ENCODE measurements at regions of chr1 and their contacts with region 1.

Region 1: GRCh38 chr1:210311726-210312493 is 16.8 kb upstream of the HHAT start:
- DNase-seq: peak in 1 of 2 donors; percentile 13
- H3K4me3 ChIP-seq: peak overlapping the region; percentile 32 to 44 (median 38)
- H3K27ac ChIP-seq: peak overlapping the region in 4 of 5 donors; percentile 43 to 74 (median 56)
- H3K4me1 ChIP-seq: peaks cover 8 to 18% (median 13%) of the 10 kb centered on the region in 4 donors
- H3K27me3 ChIP-seq: no peaks in the 10 kb centered on the region
- CTCF ChIP-seq: no peak
- EP300 ChIP-seq: no peak
- POLR2A ChIP-seq: no peak

Region 2: GRCh38 chr1:210024996-210025395 is 286.9 kb before region 1 on chr1:
- intact Hi-C with region 1: no loop called
- DNase-seq: no peak
- H3K4me3 ChIP-seq: no peak overlapping the region
- H3K27ac ChIP-seq: no peak overlapping the region
- H3K4me1 ChIP-seq: no peaks in the 10 kb centered on the region
- H3K27me3 ChIP-seq: no peaks in the 10 kb centered on the region
- CTCF ChIP-seq: no peak
- EP300 ChIP-seq: no peak
- POLR2A ChIP-seq: no peak

Region 3: GRCh38 chr1:210143465-210144062 is 168.3 kb before region 1 on chr1:
- intact Hi-C with region 1: loop called (anchors 5 kb)
- DNase-seq: peak; percentile 79 to 81
- H3K4me3 ChIP-seq: no peak overlapping the region
- H3K27ac ChIP-seq: no peak overlapping the region
- H3K4me1 ChIP-seq: no peaks in the 10 kb centered on the region
- H3K27me3 ChIP-seq: no peaks in the 10 kb centered on the region
- CTCF ChIP-seq: peak in 5 of 7 experiments; percentile 22 to 56 (median 45)
- EP300 ChIP-seq: no peak
- POLR2A ChIP-seq: no peak

Region 4: GRCh38 chr1:210200124-210200736 is 111.7 kb before region 1 on chr1:
- intact Hi-C with region 1: loop called (anchors 10 kb)
- DNase-seq: no peak
- H3K4me3 ChIP-seq: no peak overlapping the region
- H3K27ac ChIP-seq: no peak overlapping the region
- H3K4me1 ChIP-seq: no peaks in the 10 kb centered on the region
- H3K27me3 ChIP-seq: no peaks in the 10 kb centered on the region
- CTCF ChIP-seq: peak in 1 of 7 experiments; percentile 20
- EP300 ChIP-seq: no peak
- POLR2A ChIP-seq: no peak